CD4-positive, alpha-beta memory T cell (primary cell): ENCODE measurements at regions of chr1 and their contacts with region 1.

Region 1: GRCh38 chr1:244970661-244971551 is 106.6 kb upstream of the HNRNPU start:
- DNase-seq: peak; percentile 95 to 97 (median 96)
- H3K4me3 ChIP-seq: peak overlapping the region; percentile 85 to 95
- H3K4me3 Mint-ChIP-seq: peak overlapping the region; percentile 87 to 98 (median 94)
- H3K27ac ChIP-seq: peak overlapping the region; percentile 100
- H3K27ac Mint-ChIP-seq: peak overlapping the region; percentile 95 to 99 (median 99)
- H3K4me1 ChIP-seq: peaks cover 20% of the 10 kb centered on the region
- H3K4me1 Mint-ChIP-seq: peaks cover 12 to 31% (median 18%) of the 10 kb centered on the region in 4 donors
- H3K27me3 ChIP-seq: no peaks in the 10 kb centered on the region
- H3K27me3 Mint-ChIP-seq: no peaks in the 10 kb centered on the region

Region 2: GRCh38 chr1:243850452-243851256 is 1120.3 kb before region 1 on chr1:
- CTCF ChIA-PET with region 1: no interaction called
- POLR2A ChIA-PET with region 1: no interaction called
- intact Hi-C with region 1: loop called (anchors 2 kb)
- DNase-seq: peak; percentile 87 to 91 (median 89)
- H3K4me3 ChIP-seq: peak overlapping the region; percentile 63 to 70
- H3K4me3 Mint-ChIP-seq: peak overlapping the region; percentile 90 to 95 (median 94)
- H3K27ac ChIP-seq: peak overlapping the region; percentile 95
- H3K27ac Mint-ChIP-seq: peak overlapping the region; percentile 86 to 98 (median 97)
- H3K4me1 ChIP-seq: peaks cover 38% of the 10 kb centered on the region
- H3K4me1 Mint-ChIP-seq: peaks cover 22 to 39% (median 31%) of the 10 kb centered on the region in 4 donors
- H3K27me3 ChIP-seq: no peaks in the 10 kb centered on the region
- H3K27me3 Mint-ChIP-seq: peaks cover 0 to 2% of the 10 kb centered on the region in 2 donors

Region 3: GRCh38 chr1:244599937-244600350 is 371.0 kb before region 1 on chr1:
- CTCF ChIA-PET with region 1: no interaction called
- POLR2A ChIA-PET with region 1: no interaction called
- intact Hi-C with region 1: loop called (anchors 5 kb)
- DNase-seq: peak; percentile 18 to 72 (median 33)
- H3K4me3 ChIP-seq: no peak overlapping the region
- H3K4me3 Mint-ChIP-seq: peak overlapping the region in 6 of 8 donors; percentile 28 to 78 (median 58)
- H3K27ac ChIP-seq: no peak overlapping the region
- H3K27ac Mint-ChIP-seq: peak overlapping the region; percentile 78 to 94 (median 86)
- H3K4me1 ChIP-seq: peaks cover 3% of the 10 kb centered on the region
- H3K4me1 Mint-ChIP-seq: peaks cover 3 to 11% (median 10%) of the 10 kb centered on the region in 4 donors
- H3K27me3 ChIP-seq: no peaks in the 10 kb centered on the region
- H3K27me3 Mint-ChIP-seq: peaks cover 1 to 2% of the 10 kb centered on the region in 2 donors

Region 4: DNA sequence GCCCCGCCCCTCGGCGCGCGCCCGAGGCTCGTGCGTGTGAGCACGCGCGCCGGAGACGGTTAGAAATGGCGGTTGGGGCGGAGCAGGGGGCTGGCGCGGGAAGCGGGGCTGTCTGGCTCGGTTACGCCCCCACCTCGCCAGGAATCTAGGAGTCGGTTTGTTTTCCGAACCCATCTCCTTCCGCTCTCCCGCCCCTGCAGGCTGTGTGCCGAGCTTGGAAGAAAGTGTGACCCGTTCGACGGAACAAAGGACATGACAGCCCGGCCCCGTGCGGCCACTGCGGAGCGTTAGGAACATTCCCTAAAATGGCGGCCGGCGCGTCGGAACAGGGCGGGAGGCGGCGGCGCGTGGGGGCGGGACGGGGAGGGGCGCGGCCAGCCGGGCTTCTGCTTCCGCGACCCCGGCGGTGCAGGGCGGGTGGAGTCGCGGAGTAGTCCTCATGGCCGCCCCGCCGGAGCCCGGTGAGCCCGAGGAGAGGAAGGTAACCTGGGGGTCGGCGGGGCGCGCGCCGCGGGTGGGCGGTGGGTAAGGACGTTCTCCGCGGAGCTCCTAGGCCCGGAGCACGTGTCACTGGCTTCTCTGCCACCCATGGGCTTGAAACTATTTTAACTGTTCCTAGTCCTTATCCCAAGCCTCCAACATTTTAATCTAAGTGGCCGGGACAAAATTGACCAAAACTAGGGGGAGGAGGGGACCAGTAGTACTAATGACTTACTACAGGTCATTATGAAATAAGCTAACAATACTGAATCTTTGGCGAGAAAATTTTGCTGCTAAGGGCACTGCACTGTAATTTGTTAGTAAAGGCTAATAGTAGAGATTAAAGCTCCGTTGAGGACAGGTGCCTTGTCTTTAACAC is 135.4 kb before region 1 on chr1 and contains the start of gene COX20:
- CTCF ChIA-PET with region 1: interaction called, 8 read pairs
- POLR2A ChIA-PET with region 1: interaction called, 285 read pairs
- intact Hi-C with region 1: loop called (anchors 1 kb)
- DNase-seq: peak; percentile 89 to 96 (median 94)
- H3K4me3 ChIP-seq: peak within 1 kb of the TSS; percentile 74 to 87
- H3K4me3 Mint-ChIP-seq: peak within 1 kb of the TSS; percentile 89 to 98 (median 96)
- H3K27ac ChIP-seq: peak within 1 kb of the TSS; percentile 94
- H3K27ac Mint-ChIP-seq: peak within 1 kb of the TSS; percentile 93 to 100 (median 99)
- H3K4me1 ChIP-seq: peaks cover 52% of the 10 kb centered on the region
- H3K4me1 Mint-ChIP-seq: peaks cover 35 to 67% (median 42%) of the 10 kb centered on the region in 4 donors
- H3K27me3 ChIP-seq: no peaks in the 10 kb centered on the region
- H3K27me3 Mint-ChIP-seq: no peaks in the 10 kb centered on the region
- total RNA-seq, gene COX20: 31.3 to 32.9 TPM

Region 5: DNA sequence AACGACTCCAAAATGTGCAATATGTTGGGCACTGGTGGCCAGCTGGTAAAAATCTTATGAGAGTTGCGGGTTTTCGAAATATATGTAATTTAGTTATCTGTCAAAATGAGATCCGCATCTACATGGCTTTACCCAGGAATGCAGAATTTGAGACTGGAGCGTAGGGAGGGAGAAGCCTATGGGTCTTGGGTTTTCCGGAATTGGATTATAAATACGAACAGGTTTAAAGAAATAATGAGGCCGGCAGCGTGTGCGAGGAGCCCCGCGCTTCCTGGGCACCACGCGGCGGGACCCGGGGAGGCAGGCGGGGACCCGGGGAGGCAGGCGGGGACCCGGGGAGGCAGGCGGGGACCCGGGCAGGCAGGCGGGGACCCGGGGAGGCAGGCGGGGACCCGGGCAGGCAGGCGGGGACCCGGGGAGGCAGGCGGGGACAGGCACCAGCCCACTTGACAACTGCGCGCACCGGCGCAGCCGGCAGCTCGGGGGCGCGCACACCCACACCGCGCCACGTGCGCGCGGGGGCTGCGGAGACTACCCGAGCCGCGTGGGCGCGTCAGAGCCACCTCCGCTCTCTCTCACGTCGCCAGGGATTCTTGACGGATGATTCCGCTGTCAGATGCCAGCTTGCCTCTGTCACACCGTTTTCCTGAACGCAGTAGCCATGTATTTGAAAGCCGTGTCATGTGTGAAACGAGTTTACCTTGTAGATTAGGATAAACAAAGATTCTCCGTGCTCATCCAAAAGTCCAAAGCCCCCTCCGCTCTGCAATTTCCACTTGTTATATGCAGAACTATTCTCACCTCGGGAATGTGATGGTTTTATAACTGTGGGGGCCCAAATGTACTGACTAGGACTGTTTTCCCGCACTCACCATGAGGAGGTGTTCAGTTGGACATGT is 52.2 kb before region 1 on chr1:
- CTCF ChIA-PET with region 1: no interaction called
- POLR2A ChIA-PET with region 1: interaction called, 11 read pairs
- intact Hi-C with region 1: loop called (anchors 2 kb)
- DNase-seq: peak; percentile 54 to 79 (median 78)
- H3K4me3 ChIP-seq: peak overlapping the region; percentile 36 to 64
- H3K4me3 Mint-ChIP-seq: peak overlapping the region; percentile 78 to 94 (median 91)
- H3K27ac ChIP-seq: no peak overlapping the region
- H3K27ac Mint-ChIP-seq: peak overlapping the region; percentile 54 to 91 (median 85)
- H3K4me1 ChIP-seq: peaks cover 7% of the 10 kb centered on the region
- H3K4me1 Mint-ChIP-seq: peaks cover 4 to 16% (median 11%) of the 10 kb centered on the region in 4 donors
- H3K27me3 ChIP-seq: no peaks in the 10 kb centered on the region
- H3K27me3 Mint-ChIP-seq: peaks cover 4 to 7% of the 10 kb centered on the region in 2 donors

Region 6: GRCh38 chr1:246566128-246566812 is 1595.4 kb after region 1 on chr1 and contains the starts of genes CNST and TFB2M:
- CTCF ChIA-PET with region 1: no interaction called
- POLR2A ChIA-PET with region 1: no interaction called
- intact Hi-C with region 1: loop called (anchors 2 kb)
- DNase-seq: peak; percentile 89 to 93 (median 91)
- H3K4me3 ChIP-seq: peak within 1 kb of the TSS; percentile 84 to 99
- H3K4me3 Mint-ChIP-seq: peak within 1 kb of the TSS; percentile 97 to 99 (median 98)
- H3K27ac ChIP-seq: peak within 1 kb of the TSS; percentile 92
- H3K27ac Mint-ChIP-seq: peak within 1 kb of the TSS; percentile 89 to 99 (median 97)
- H3K4me1 ChIP-seq: peaks cover 61% of the 10 kb centered on the region
- H3K4me1 Mint-ChIP-seq: peaks cover 29 to 68% (median 46%) of the 10 kb centered on the region in 4 donors
- H3K27me3 ChIP-seq: no peaks in the 10 kb centered on the region
- H3K27me3 Mint-ChIP-seq: no peaks in the 10 kb centered on the region
- total RNA-seq, gene CNST: 97.8 to 103 TPM
- total RNA-seq, gene TFB2M: 8.8 to 9.6 TPM